ENCODE measurements at regions of chr2 and their contacts with region 1.

Region 1: DNA sequence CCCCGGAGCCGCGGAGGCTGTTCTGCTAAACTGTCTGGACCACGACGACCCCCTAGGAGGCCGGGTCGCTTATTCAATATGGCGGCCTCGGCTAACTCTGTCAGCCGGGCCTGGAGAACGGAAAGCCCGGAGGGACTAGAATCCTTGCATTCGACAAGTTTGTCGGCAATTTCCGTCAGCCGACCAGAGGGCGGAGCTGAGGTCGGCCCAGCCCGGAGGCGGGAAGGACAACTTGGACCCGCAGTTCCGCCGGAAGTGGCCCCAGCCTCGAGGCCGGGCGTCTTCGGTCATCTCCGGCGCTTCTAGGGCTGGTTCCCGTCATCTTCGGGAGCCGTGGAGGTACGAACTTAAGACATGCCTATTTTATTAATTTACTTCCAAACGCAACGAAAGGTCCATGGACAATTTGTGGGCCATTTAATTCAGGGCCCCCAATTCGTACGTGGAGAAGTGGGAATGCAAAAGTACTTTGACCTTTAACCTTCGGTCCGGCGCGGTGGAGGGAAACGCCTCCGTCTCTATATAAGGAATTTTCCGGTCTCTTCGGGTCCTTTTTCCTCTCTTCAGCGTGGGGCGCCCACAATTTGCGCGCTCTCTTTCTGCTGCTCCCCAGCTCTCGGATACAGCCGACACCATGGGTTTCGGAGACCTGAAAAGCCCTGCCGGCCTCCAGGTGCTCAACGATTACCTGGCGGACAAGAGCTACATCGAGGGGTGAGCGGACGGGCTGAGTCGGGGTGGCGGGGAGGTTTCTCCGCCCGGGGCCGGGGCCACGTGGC is at the starts of genes EEF1B2 and NDUFS1:
- DNase-seq: peak; percentile 98
- ATAC-seq: peak; percentile 88
- H3K4me3 ChIP-seq: peak within 1 kb of the TSS; percentile 87 to 90 (median 87)
- H3K27ac ChIP-seq: peak within 1 kb of the TSS; percentile 80
- H3K4me1 ChIP-seq: peaks cover 53% of the 10 kb centered on the region
- H3K27me3 ChIP-seq: no peaks in the 10 kb centered on the region; a peak in 1 of 5 replicates
- CTCF ChIP-seq: peak; percentile 18; the same call in 1 of the 2 replicates
- EP300 ChIP-seq: peak in 1 of 2 experiments; percentile 46; a peak in 1 of 4 replicates
- POLR2A ChIP-seq: peak; percentile 77 to 91
- RAD21 ChIP-seq: peak; percentile 23; the same call in 1 of the 2 replicates
- total RNA-seq, gene EEF1B2: 1,731 and 2,041 TPM in 2 replicates
- total RNA-seq, gene NDUFS1: 242 and 396 TPM in 2 replicates

Region 2: GRCh38 chr2:206085742-206086445 is 73.6 kb before region 1 on chr2 and contains the start of gene INO80D:
- CTCF ChIA-PET with region 1: no interaction called
- POLR2A ChIA-PET with region 1: interaction called, 32 read pairs
- in situ Hi-C with region 1: no loop called
- intact Hi-C with region 1: loop called (anchors 1 kb)
- DNase-seq: peak; percentile 87
- ATAC-seq: peak; percentile 92
- H3K4me3 ChIP-seq: peak within 1 kb of the TSS; percentile 73 to 100 (median 84)
- H3K27ac ChIP-seq: peak within 1 kb of the TSS; percentile 100
- H3K4me1 ChIP-seq: peaks cover 36% of the 10 kb centered on the region
- H3K27me3 ChIP-seq: no peaks in the 10 kb centered on the region; a peak in 2 of 5 replicates
- CTCF ChIP-seq: peak; percentile 57
- EP300 ChIP-seq: peak in 1 of 2 experiments; percentile 3; a peak in 1 of 4 replicates
- POLR2A ChIP-seq: peak; percentile 81 to 95
- RAD21 ChIP-seq: peak; percentile 22; the same call in 1 of the 2 replicates
- total RNA-seq, gene INO80D: 7.9 and 13.6 TPM in 2 replicates

Region 3: GRCh38 chr2:206230060-206230762 is 70.7 kb after region 1 on chr2:
- CTCF ChIA-PET with region 1: no interaction called
- POLR2A ChIA-PET with region 1: no interaction called
- in situ Hi-C with region 1: no loop called
- intact Hi-C with region 1: no loop called
- DNase-seq: no peak
- ATAC-seq: peak; percentile 72
- H3K4me3 ChIP-seq: no peak overlapping the region
- H3K27ac ChIP-seq: no peak overlapping the region
- H3K4me1 ChIP-seq: no peaks in the 10 kb centered on the region
- H3K27me3 ChIP-seq: peaks cover 0 to 8% of the 10 kb centered on the region in 2 experiments; a peak in 1 of 5 replicates
- CTCF ChIP-seq: no peak
- EP300 ChIP-seq: no peak
- POLR2A ChIP-seq: no peak
- RAD21 ChIP-seq: no peak

Region 4: GRCh38 chr2:206260188-206261012 is 100.9 kb after region 1 on chr2:
- CTCF ChIA-PET with region 1: no interaction called
- POLR2A ChIA-PET with region 1: no interaction called
- in situ Hi-C with region 1: no loop called
- intact Hi-C with region 1: loop called (anchors 2 kb)
- DNase-seq: peak; percentile 23
- ATAC-seq: peak; percentile 89
- H3K4me3 ChIP-seq: no peak overlapping the region
- H3K27ac ChIP-seq: no peak overlapping the region
- H3K4me1 ChIP-seq: no peaks in the 10 kb centered on the region
- H3K27me3 ChIP-seq: peaks cover 7 to 82% of the 10 kb centered on the region in 2 experiments; a peak in 4 of 5 replicates
- CTCF ChIP-seq: peak; percentile 41; the same call in 1 of the 2 replicates
- EP300 ChIP-seq: no peak
- POLR2A ChIP-seq: no peak
- RAD21 ChIP-seq: no peak

Region 5: DNA sequence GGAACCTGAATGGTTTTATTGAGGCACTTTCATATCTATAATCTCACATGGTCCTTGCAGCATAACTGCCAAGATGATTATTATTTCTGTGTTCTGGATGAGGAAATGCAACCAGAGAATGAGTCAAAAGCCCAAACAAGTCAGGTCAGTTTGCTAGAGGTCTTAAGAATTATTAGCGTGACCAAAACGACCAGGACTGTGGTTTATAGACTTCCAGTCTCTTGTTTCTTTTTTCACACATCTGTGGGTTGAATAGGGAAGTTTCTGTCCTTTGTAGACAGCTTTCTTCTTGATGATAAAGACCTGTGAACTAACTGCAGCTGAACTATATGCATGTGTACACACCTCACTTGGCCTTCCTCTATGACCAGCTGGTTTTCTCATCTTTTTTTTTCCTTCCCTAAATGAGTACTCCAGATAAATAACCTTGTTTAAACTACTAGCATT is 297.7 kb after region 1 on chr2:
- CTCF ChIA-PET with region 1: no interaction called
- POLR2A ChIA-PET with region 1: no interaction called
- in situ Hi-C with region 1: no loop called
- intact Hi-C with region 1: no loop called
- DNase-seq: no peak
- ATAC-seq: no peak
- H3K4me3 ChIP-seq: no peak overlapping the region
- H3K27ac ChIP-seq: no peak overlapping the region
- H3K4me1 ChIP-seq: no peaks in the 10 kb centered on the region
- H3K27me3 ChIP-seq: no peaks in the 10 kb centered on the region
- CTCF ChIP-seq: no peak
- EP300 ChIP-seq: no peak
- POLR2A ChIP-seq: no peak
- RAD21 ChIP-seq: no peak

Region 6: GRCh38 chr2:206556357-206556949 is 396.9 kb after region 1 on chr2:
- CTCF ChIA-PET with region 1: no interaction called
- POLR2A ChIA-PET with region 1: no interaction called
- in situ Hi-C with region 1: no loop called
- intact Hi-C with region 1: loop called (anchors 10 kb)
- DNase-seq: peak; percentile 25
- ATAC-seq: peak; percentile 67
- H3K4me3 ChIP-seq: no peak overlapping the region
- H3K27ac ChIP-seq: no peak overlapping the region
- H3K4me1 ChIP-seq: no peaks in the 10 kb centered on the region
- H3K27me3 ChIP-seq: no peaks in the 10 kb centered on the region
- CTCF ChIP-seq: peak; percentile 58
- EP300 ChIP-seq: no peak
- POLR2A ChIP-seq: no peak
- RAD21 ChIP-seq: no peak